MCF 10A (cell line): ENCODE measurements at regions of chr20 and their contacts with region 1.

Region 1: GRCh38 chr20:62937366-62938104 is 412 bp upstream of the GID8 start:
- DNase-seq: peak; percentile 94
- H3K4me3 Mint-ChIP-seq: no peak overlapping the region
- H3K27ac Mint-ChIP-seq: peak overlapping the region; percentile 97
- H3K4me1 Mint-ChIP-seq: peaks cover 15% of the 10 kb centered on the region
- H3K27me3 Mint-ChIP-seq: no peaks in the 10 kb centered on the region
- CTCF ChIP-seq: no peak

Region 2: DNA sequence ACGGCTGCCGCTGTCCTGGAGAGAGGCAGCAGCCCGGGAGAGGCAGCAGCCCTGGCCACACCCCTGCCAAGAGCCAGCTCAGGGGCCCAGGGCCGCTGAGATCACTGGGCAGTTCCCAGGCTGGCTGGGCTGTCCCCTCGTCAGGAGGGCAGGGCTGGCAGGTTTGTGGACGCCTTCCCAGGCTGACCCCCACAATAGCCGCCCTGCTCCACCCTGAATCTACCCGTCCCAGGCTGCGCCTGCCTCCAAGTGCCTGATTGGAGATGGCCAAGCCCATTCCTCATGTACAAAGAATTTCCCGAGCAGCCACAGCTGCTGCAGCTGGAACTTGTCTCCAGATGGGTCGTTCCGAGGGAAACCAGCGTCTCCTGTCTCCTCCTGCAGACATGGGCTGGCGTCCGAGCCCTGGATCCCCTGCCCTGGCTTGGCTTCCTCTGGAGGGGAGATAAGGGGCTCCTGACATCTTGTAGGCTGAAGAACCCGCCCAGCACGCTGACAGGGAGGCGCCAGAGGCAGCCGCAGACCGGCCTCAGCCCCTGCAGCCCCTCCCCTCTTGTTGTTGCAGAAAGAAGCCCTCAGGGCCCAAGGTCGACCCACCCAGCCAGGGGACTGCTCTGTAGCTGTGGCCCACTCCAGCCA is 452.4 kb before region 1 on chr20:
- CTCF ChIA-PET with region 1: no interaction called
- POLR2A ChIA-PET with region 1: no interaction called
- intact Hi-C with region 1: no loop called
- DNase-seq: no peak
- H3K4me3 Mint-ChIP-seq: no peak overlapping the region
- H3K27ac Mint-ChIP-seq: no peak overlapping the region
- H3K4me1 Mint-ChIP-seq: no peaks in the 10 kb centered on the region
- H3K27me3 Mint-ChIP-seq: peaks cover 27% of the 10 kb centered on the region
- CTCF ChIP-seq: no peak

Region 3: GRCh38 chr20:62861726-62862336 is 75.7 kb before region 1 on chr20 and contains the start of gene TCFL5:
- CTCF ChIA-PET with region 1: no interaction called
- POLR2A ChIA-PET with region 1: interaction called, 20 read pairs
- intact Hi-C with region 1: no loop called
- DNase-seq: peak; percentile 75
- H3K4me3 Mint-ChIP-seq: peak within 1 kb of the TSS; percentile 64
- H3K27ac Mint-ChIP-seq: peak within 1 kb of the TSS; percentile 5
- H3K4me1 Mint-ChIP-seq: peaks cover 17% of the 10 kb centered on the region
- H3K27me3 Mint-ChIP-seq: peaks cover 10% of the 10 kb centered on the region
- CTCF ChIP-seq: no peak
- total RNA-seq, gene TCFL5: 10.8 and 12.8 TPM in 2 replicates

Region 4: GRCh38 chr20:62921119-62921687 is 16.3 kb before region 1 on chr20:
- CTCF ChIA-PET with region 1: interaction called, 11 read pairs
- POLR2A ChIA-PET with region 1: interaction called, 341 read pairs
- intact Hi-C with region 1: no loop called
- DNase-seq: peak; percentile 79
- H3K4me3 Mint-ChIP-seq: peak overlapping the region; percentile 35
- H3K27ac Mint-ChIP-seq: no peak overlapping the region
- H3K4me1 Mint-ChIP-seq: peaks cover 54% of the 10 kb centered on the region
- H3K27me3 Mint-ChIP-seq: no peaks in the 10 kb centered on the region
- CTCF ChIP-seq: peak; percentile 44

Region 5: GRCh38 chr20:62926239-62927104 is 11.1 kb before region 1 on chr20 and contains the start of gene DIDO1:
- CTCF ChIA-PET with region 1: interaction called, 11 read pairs
- POLR2A ChIA-PET with region 1: interaction called, 341 read pairs
- intact Hi-C with region 1: no loop called
- DNase-seq: peak; percentile 82
- H3K4me3 Mint-ChIP-seq: peak within 1 kb of the TSS; percentile 76
- H3K27ac Mint-ChIP-seq: peak within 1 kb of the TSS; percentile 95
- H3K4me1 Mint-ChIP-seq: peaks cover 31% of the 10 kb centered on the region
- H3K27me3 Mint-ChIP-seq: no peaks in the 10 kb centered on the region
- CTCF ChIP-seq: peak; percentile 65
- total RNA-seq, gene DIDO1: 36.8 and 40.7 TPM in 2 replicates

Region 6: DNA sequence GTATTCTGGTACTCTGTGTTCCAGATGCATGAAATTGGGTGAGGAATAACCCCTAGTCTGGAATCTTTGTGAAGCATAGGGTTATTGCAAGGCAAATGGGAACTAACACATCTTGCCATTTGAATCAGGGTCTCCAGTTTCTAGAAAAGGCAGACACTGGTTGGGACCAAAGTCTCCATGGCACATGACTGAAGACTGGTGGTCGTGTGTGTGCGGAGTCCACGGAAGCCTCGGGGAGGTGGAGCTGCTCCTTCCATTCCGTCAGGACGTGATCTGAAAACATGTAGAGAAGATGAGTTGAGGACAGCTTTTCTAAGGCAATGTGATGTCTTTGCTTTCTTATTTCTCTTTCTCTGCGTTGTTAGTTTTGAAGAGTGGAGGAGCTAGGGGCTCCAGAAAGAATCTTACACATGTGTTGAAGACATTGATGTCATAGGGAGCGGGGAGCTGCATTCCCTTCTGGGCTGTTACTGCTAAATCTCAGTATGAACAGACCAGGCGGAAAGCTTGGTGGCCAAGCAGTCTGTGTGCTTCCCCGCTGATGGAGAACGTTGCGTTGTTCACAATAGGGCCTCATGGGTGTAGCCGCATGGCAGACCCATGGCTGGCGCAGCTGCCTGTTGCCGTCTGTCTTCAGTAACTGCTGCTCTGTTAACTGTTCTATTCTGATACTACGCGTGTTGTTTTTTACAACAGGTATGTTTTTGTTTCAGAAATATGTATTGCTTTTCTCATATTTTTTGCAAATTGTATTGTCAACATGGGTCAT is 10.2 kb after region 1 on chr20:
- CTCF ChIA-PET with region 1: no interaction called
- POLR2A ChIA-PET with region 1: interaction called, 12 read pairs
- intact Hi-C with region 1: no loop called
- DNase-seq: no peak
- H3K4me3 Mint-ChIP-seq: no peak overlapping the region
- H3K27ac Mint-ChIP-seq: no peak overlapping the region
- H3K4me1 Mint-ChIP-seq: no peaks in the 10 kb centered on the region
- H3K27me3 Mint-ChIP-seq: no peaks in the 10 kb centered on the region
- CTCF ChIP-seq: no peak